MCF 10A (cell line): ENCODE measurements at regions of chr10 and their contacts with region 1.

Region 1: DNA sequence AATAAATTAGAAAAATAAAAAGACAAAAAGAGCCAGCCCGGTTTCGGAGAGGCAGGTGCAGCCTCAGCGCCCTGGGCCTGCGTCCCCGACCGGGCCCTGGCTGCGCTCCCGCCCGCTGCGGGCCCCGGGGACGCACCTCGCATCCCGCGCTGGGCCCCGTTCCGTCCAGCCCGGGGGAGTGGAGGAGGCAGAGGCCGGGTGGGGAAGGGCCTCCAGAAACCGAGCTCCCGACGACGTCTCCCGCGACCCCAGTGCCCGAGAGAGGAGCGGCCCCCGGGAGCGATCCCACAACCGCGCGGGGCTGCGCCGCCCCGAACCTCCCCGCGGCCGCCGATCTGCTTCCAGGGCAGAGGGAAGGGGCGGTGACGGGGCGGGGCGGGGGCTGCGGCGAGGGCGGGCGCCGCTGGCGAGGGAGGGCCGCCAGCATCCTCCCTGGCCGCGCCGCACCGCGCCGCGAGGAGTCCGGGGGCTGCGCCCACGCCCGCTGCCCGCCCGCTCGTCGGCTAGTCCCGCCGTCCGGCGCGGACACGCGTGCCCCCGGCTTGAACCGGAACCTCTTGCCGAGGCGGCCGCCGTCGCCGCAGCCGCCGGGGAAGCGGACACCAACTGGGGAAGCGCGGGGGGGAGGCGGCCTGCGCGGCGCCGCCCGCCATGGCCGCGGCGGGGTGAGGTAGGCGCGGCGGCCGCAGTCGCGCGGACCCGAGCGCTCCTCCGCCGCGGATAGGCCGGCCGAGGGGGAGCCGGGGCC is at the start of gene CCNY:
- DNase-seq: peak; percentile 72
- H3K4me3 Mint-ChIP-seq: peak within 1 kb of the TSS; percentile 89
- H3K27ac Mint-ChIP-seq: peak within 1 kb of the TSS; percentile 93
- H3K4me1 Mint-ChIP-seq: peaks cover 58% of the 10 kb centered on the region
- H3K27me3 Mint-ChIP-seq: no peaks in the 10 kb centered on the region
- CTCF ChIP-seq: no peak
- total RNA-seq, gene CCNY: 68.9 and 79.7 TPM in 2 replicates

Region 2: GRCh38 chr10:35126530-35127296 is 209.5 kb before region 1 on chr10 and contains the start of gene CREM:
- CTCF ChIA-PET with region 1: no interaction called
- POLR2A ChIA-PET with region 1: no interaction called
- intact Hi-C with region 1: loop called (anchors 5 kb)
- DNase-seq: peak; percentile 98
- H3K4me3 Mint-ChIP-seq: peak within 1 kb of the TSS; percentile 82
- H3K27ac Mint-ChIP-seq: peak within 1 kb of the TSS; percentile 97
- H3K4me1 Mint-ChIP-seq: peaks cover 6% of the 10 kb centered on the region
- H3K27me3 Mint-ChIP-seq: no peaks in the 10 kb centered on the region
- CTCF ChIP-seq: peak; percentile 86
- total RNA-seq, gene CREM: 30.2 and 31.3 TPM in 2 replicates

Region 3: GRCh38 chr10:35306852-35307256 is 29.4 kb before region 1 on chr10:
- CTCF ChIA-PET with region 1: no interaction called
- POLR2A ChIA-PET with region 1: interaction called, 19 read pairs
- intact Hi-C with region 1: no loop called
- DNase-seq: peak; percentile 79
- H3K4me3 Mint-ChIP-seq: peak overlapping the region; percentile 66
- H3K27ac Mint-ChIP-seq: peak overlapping the region; percentile 94
- H3K4me1 Mint-ChIP-seq: peaks cover 18% of the 10 kb centered on the region
- H3K27me3 Mint-ChIP-seq: no peaks in the 10 kb centered on the region
- CTCF ChIP-seq: no peak

Region 4: GRCh38 chr10:35409094-35409582 is 72.9 kb after region 1 on chr10:
- CTCF ChIA-PET with region 1: no interaction called
- POLR2A ChIA-PET with region 1: interaction called, 5 read pairs
- intact Hi-C with region 1: loop called (anchors 5 kb)
- DNase-seq: peak; percentile 73
- H3K4me3 Mint-ChIP-seq: no peak overlapping the region
- H3K27ac Mint-ChIP-seq: no peak overlapping the region
- H3K4me1 Mint-ChIP-seq: peaks cover 29% of the 10 kb centered on the region
- H3K27me3 Mint-ChIP-seq: no peaks in the 10 kb centered on the region
- CTCF ChIP-seq: no peak

Region 5: DNA sequence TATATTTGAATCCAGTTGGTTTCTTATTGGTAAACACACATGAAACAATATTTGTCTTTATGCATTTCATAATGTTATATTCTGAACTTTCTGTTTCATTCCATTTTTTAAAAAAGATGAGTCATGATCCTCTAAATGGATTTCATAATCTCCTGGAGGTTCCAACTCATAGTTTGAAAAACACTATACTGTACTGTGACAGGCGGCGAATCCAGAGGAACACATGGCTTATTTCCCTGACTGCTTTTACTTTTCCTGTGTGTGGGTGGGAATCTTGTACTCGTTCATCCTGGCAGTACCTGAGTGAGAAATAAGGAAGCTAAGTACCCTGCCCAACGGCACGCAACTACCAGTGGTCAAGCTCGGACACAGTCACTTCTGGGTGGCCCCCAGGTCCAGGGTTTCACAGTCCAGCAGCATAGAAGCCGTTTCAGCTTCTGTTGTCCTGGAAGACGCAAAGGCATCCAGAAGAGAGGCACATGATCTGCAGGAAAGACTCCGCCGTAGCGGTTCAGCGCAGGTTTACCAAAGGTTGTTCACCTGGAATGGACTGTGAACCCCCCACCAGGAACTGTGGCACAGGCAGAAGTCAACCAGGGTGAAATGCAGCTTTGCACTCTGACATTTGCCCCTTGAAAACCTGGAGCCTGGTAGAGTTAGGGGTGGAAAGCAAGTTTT is 117.7 kb after region 1 on chr10:
- CTCF ChIA-PET with region 1: no interaction called
- POLR2A ChIA-PET with region 1: interaction called, 3 read pairs
- intact Hi-C with region 1: loop called (anchors 1 kb)
- DNase-seq: peak; percentile 86
- H3K4me3 Mint-ChIP-seq: peak overlapping the region; percentile 69
- H3K27ac Mint-ChIP-seq: peak overlapping the region; percentile 88
- H3K4me1 Mint-ChIP-seq: peaks cover 50% of the 10 kb centered on the region
- H3K27me3 Mint-ChIP-seq: no peaks in the 10 kb centered on the region
- CTCF ChIP-seq: no peak

Region 6: GRCh38 chr10:35546824-35547273 is 210.6 kb after region 1 on chr10:
- CTCF ChIA-PET with region 1: interaction called, 6 read pairs
- POLR2A ChIA-PET with region 1: interaction called, 9 read pairs
- intact Hi-C with region 1: loop called (anchors 1 kb)
- DNase-seq: peak; percentile 87
- H3K4me3 Mint-ChIP-seq: peak overlapping the region; percentile 50
- H3K27ac Mint-ChIP-seq: peak overlapping the region; percentile 90
- H3K4me1 Mint-ChIP-seq: peaks cover 26% of the 10 kb centered on the region
- H3K27me3 Mint-ChIP-seq: no peaks in the 10 kb centered on the region
- CTCF ChIP-seq: peak; percentile 15